Mammary epithelial cell (primary cell): ENCODE measurements at regions of chr19 and their contacts with region 1.

Region 1: GRCh38 chr19:1406774-1407499 is 449 bp upstream of the DAZAP1 start:
- DNase-seq: peak; percentile 98
- H3K4me3 ChIP-seq: peak overlapping the region; percentile 56 to 71 (median 65)
- H3K27ac ChIP-seq: peak overlapping the region; percentile 25
- H3K4me1 ChIP-seq: peaks cover 50% of the 10 kb centered on the region
- H3K27me3 ChIP-seq: no peaks in the 10 kb centered on the region
- CTCF ChIP-seq: peak; percentile 37 to 63

Region 2: DNA sequence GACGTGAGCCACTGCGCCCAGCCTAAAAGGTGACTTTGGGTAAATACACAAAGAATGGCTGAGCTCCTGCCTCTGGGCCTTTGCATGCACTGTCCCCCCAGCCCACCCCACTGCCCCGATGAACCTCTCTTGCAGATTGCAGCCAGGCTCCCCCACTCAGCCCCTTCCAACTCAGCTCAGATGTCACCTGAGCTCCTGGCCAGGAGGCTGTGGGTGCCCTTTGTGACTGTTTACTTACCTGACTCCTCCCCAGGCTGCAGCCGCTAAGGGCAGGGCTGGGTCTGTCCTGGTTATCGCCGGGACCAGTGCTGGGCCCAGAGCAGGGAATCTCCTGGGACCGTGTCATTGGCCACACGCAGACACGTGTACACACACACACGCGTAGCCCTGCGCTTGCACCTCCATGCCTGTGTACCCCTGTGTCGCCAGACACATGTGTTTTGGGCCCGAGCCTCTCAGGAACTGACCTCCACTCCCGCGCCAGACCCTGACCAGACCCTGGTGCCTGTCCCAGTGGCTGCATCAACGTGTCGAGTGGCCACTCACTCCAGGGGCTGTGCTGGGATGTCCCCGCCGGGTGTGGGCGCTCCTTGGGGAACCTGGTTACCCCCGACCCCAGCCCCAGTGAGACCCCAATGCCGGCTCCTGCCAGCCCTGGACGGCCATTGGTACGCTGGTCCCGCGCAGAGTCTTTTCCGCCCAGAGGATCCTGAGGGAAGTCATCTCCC is 102.6 kb before region 1 on chr19:
- CTCF ChIA-PET with region 1: no interaction called
- dilution Hi-C with region 1: no loop called
- in situ Hi-C with region 1: no loop called
- intact Hi-C with region 1: no loop called
- DNase-seq: no peak
- H3K4me3 ChIP-seq: no peak overlapping the region
- H3K27ac ChIP-seq: no peak overlapping the region
- H3K4me1 ChIP-seq: no peaks in the 10 kb centered on the region
- H3K27me3 ChIP-seq: no peaks in the 10 kb centered on the region
- CTCF ChIP-seq: no peak

Region 3: DNA sequence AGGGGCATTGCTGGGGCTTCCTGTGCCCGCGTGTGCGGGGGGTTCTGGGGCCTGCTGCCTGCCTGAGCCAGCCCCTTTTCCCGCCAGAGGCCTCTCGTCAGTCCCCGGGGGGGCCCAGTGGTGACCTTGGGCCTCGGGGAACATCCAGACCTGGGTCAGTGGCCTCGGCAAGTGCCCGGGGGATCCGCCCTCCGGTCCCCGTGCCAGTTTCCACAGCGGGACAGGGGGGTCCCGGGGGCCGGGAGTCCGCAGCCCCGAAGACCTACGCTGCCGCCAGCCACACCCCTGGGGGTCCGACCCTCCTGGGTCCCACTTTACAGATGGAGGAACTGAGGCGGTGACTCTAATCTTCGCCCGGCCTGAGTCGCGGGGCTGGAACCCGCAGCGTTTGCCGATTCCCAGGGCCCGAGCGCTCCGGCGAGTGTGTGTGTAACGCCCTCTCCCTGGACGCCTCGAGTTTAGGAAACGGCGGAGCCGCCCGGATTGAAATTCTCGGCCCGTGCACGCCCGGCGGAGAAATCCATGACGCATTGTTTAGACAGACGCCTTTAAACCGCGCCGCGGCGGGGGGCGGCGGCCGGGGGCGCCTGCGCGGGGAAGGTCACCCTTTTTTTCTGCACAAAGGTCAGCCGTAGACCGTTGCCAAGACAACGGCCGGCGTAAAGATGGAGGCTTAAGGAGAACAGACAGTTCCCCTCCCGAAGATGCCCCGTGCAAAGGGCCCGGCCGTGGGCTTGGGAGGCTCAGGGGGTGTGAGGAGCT is 82.0 kb before region 1 on chr19:
- CTCF ChIA-PET with region 1: no interaction called
- dilution Hi-C with region 1: loop called (anchors 5 kb)
- in situ Hi-C with region 1: no loop called
- intact Hi-C with region 1: no loop called
- DNase-seq: peak; percentile 57
- H3K4me3 ChIP-seq: peak overlapping the region in 2 of 3 experiments; percentile 24 to 30
- H3K27ac ChIP-seq: no peak overlapping the region
- H3K4me1 ChIP-seq: peaks cover 10% of the 10 kb centered on the region
- H3K27me3 ChIP-seq: peaks cover 2% of the 10 kb centered on the region
- CTCF ChIP-seq: no peak

Region 4: GRCh38 chr19:1383311-1384084 is 23.4 kb before region 1 on chr19 and contains the start of gene NDUFS7:
- CTCF ChIA-PET with region 1: no interaction called
- dilution Hi-C with region 1: no loop called
- in situ Hi-C with region 1: no loop called
- intact Hi-C with region 1: loop called (anchors 1 kb)
- DNase-seq: peak; percentile 88
- H3K4me3 ChIP-seq: peak within 1 kb of the TSS; percentile 55 to 99 (median 99)
- H3K27ac ChIP-seq: peak within 1 kb of the TSS; percentile 37
- H3K4me1 ChIP-seq: no peaks in the 10 kb centered on the region
- H3K27me3 ChIP-seq: no peaks in the 10 kb centered on the region
- CTCF ChIP-seq: no peak
- total RNA-seq, gene NDUFS7: 34.3 to 73.6 TPM

Region 5: GRCh38 chr19:1438035-1438932 is 31.3 kb after region 1 on chr19 and contains the start of gene RPS15:
- CTCF ChIA-PET with region 1: no interaction called
- dilution Hi-C with region 1: no loop called
- in situ Hi-C with region 1: no loop called
- intact Hi-C with region 1: loop called (anchors 2 kb)
- DNase-seq: peak; percentile 91
- H3K4me3 ChIP-seq: peak within 1 kb of the TSS; percentile 87 to 99 (median 89)
- H3K27ac ChIP-seq: peak within 1 kb of the TSS; percentile 81
- H3K4me1 ChIP-seq: peaks cover 23% of the 10 kb centered on the region
- H3K27me3 ChIP-seq: no peaks in the 10 kb centered on the region
- CTCF ChIP-seq: peak; percentile 87 to 95
- total RNA-seq, gene RPS15: 318 to 950 TPM

Region 6: GRCh38 chr19:1521636-1522035 is 114.7 kb after region 1 on chr19:
- CTCF ChIA-PET with region 1: no interaction called
- dilution Hi-C with region 1: loop called (anchors 5 kb)
- in situ Hi-C with region 1: no loop called
- intact Hi-C with region 1: no loop called
- DNase-seq: no peak
- H3K4me3 ChIP-seq: no peak overlapping the region
- H3K27ac ChIP-seq: no peak overlapping the region
- H3K4me1 ChIP-seq: no peaks in the 10 kb centered on the region
- H3K27me3 ChIP-seq: peaks cover 13% of the 10 kb centered on the region
- CTCF ChIP-seq: no peak